ENCODE measurements at regions of chr6 and their contacts with region 1.

Region 1: GRCh38 chr6:96575359-96575758 is 12.4 kb downstream of the FHL5 start:
- DNase-seq: no peak
- CTCF ChIP-seq: no peak

Region 2: DNA sequence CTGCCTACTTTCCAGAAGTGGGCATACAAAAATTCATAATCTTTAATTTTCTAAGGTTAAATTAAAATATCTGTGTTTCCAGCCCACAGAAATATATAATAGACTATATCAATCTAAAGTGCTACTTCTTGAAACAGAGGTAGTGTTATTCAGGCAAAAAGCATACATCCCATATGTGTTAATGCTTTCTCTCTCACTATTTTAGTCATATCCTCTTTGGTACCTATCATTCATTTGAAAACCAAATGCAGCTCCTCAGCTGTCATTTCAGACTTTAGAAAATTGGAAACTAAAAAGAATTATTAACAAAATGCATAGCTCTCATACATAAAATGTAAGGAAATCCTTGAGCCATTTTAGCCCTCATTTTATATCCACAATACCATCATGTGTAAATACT is 11.5 kb before region 1 on chr6:
- CTCF ChIA-PET with region 1: interaction called, 30 read pairs
- POLR2A ChIA-PET with region 1: no interaction called
- DNase-seq: no peak
- CTCF ChIP-seq: no peak